CD14-positive monocyte (primary cell): ENCODE measurements at regions of chr1 and their contacts with region 1.

Region 1: DNA sequence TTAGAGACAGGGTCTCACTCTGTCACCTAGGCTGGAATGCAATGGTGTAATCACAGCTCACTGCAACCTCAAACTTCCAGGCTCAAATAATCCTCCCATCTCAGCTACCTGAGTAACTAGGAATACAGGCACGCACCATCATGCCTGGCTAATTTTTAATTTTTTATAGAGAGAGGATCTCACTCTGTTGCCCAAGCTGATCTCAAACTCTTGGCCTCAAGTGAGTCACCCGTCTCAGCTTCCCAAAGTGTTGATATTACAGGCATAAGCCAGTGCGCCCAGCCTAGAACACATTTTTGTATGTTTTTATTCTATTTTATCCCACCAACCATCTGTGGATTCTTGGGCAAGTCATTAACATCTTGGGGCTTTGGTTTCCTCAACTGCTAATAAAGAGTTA is 100.5 kb downstream of the AK5 start:
- DNase-seq: no peak
- H3K4me3 ChIP-seq: no peak overlapping the region
- H3K4me3 Mint-ChIP-seq: no peak overlapping the region
- H3K27ac ChIP-seq: no peak overlapping the region
- H3K27ac Mint-ChIP-seq: no peak overlapping the region
- H3K4me1 ChIP-seq: no peaks in the 10 kb centered on the region
- H3K4me1 Mint-ChIP-seq: peaks cover 15% of the 10 kb centered on the region
- H3K27me3 ChIP-seq: no peaks in the 10 kb centered on the region
- H3K27me3 Mint-ChIP-seq: peaks cover 0 to 3% (median 0%) of the 10 kb centered on the region in 3 donors
- CTCF ChIP-seq: no peak

Region 2: GRCh38 chr1:77459881-77460280 is 77.5 kb after region 1 on chr1:
- intact Hi-C with region 1: loop called in 1 of 2 experiments (anchors 10 kb)
- DNase-seq: peak; percentile 17 to 38 (median 33)
- H3K4me3 ChIP-seq: no peak overlapping the region
- H3K4me3 Mint-ChIP-seq: no peak overlapping the region
- H3K27ac ChIP-seq: no peak overlapping the region
- H3K27ac Mint-ChIP-seq: peak overlapping the region in 3 of 7 donors; percentile 12 to 75 (median 62)
- H3K4me1 ChIP-seq: peaks cover 11 to 27% of the 10 kb centered on the region in 2 donors
- H3K4me1 Mint-ChIP-seq: peaks cover 28% of the 10 kb centered on the region
- H3K27me3 ChIP-seq: no peaks in the 10 kb centered on the region
- H3K27me3 Mint-ChIP-seq: peaks cover 0 to 5% (median 1%) of the 10 kb centered on the region in 3 donors
- CTCF ChIP-seq: no peak